ENCODE measurements at regions of chr3 and their contacts with region 1.

Region 1: GRCh38 chr3:171829841-171830517 is 13.2 kb upstream of the TMEM212 start:
- DNase-seq: peak; percentile 88
- H3K4me3 Mint-ChIP-seq: no peak overlapping the region
- H3K27ac Mint-ChIP-seq: no peak overlapping the region
- H3K4me1 Mint-ChIP-seq: peaks cover 28% of the 10 kb centered on the region
- H3K27me3 Mint-ChIP-seq: no peaks in the 10 kb centered on the region
- CTCF ChIP-seq: peak; percentile 85

Region 2: DNA sequence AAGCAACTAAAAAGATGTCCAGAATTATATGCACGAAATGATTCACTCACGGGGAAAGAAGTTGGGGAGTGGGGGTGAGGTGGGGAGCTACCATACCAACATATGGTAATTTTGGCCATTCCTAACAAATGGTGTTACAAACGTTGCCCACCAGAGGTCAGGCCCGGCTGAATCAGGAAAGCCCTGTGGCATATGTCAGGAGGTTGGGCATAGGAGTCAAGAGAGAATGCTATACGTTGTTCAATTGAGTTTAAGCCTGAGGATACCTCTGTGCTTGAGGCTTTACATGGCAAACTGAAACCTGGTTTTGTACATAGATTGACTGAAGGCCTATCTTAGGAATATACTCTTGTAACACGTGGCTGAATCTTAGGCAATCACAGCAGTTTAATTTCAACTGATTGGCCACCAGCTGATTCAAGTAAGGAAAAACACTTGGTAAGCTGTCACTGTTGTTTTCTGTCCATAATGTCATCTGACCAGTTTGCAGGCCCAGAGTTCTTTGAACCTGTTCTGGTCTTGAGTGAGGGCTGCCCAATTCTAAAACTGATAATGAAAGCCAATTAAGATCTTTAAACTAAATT is 780.0 kb before region 1 on chr3:
- CTCF ChIA-PET with region 1: interaction called, 5 read pairs
- POLR2A ChIA-PET with region 1: no interaction called
- intact Hi-C with region 1: loop called (anchors 5 kb)
- DNase-seq: peak; percentile 77
- H3K4me3 Mint-ChIP-seq: no peak overlapping the region
- H3K27ac Mint-ChIP-seq: peak overlapping the region; percentile 11
- H3K4me1 Mint-ChIP-seq: peaks cover 8% of the 10 kb centered on the region
- H3K27me3 Mint-ChIP-seq: no peaks in the 10 kb centered on the region
- CTCF ChIP-seq: peak; percentile 79

Region 3: DNA sequence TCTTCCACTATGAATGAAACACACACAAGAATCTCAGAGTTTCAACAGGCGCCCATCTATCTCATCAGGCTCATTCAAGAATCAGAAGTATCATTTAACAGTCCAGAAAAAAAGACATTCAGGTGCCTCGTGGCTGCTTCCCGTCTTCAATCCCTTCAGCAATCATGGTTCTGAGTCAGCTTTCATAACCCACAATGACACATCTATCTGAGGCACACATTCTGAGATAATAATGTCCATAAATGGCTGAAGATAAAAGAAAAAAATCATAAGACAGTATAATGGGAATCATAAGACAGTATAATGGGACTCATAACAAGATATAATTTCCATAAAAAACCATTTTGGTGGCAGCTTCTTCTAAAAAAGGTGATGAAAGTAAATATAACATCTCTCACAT is 422.2 kb before region 1 on chr3:
- CTCF ChIA-PET with region 1: no interaction called
- POLR2A ChIA-PET with region 1: no interaction called
- intact Hi-C with region 1: no loop called
- DNase-seq: peak; percentile 34
- H3K4me3 Mint-ChIP-seq: no peak overlapping the region
- H3K27ac Mint-ChIP-seq: peak overlapping the region; percentile 62
- H3K4me1 Mint-ChIP-seq: peaks cover 9% of the 10 kb centered on the region
- H3K27me3 Mint-ChIP-seq: no peaks in the 10 kb centered on the region
- CTCF ChIP-seq: no peak

Region 4: DNA sequence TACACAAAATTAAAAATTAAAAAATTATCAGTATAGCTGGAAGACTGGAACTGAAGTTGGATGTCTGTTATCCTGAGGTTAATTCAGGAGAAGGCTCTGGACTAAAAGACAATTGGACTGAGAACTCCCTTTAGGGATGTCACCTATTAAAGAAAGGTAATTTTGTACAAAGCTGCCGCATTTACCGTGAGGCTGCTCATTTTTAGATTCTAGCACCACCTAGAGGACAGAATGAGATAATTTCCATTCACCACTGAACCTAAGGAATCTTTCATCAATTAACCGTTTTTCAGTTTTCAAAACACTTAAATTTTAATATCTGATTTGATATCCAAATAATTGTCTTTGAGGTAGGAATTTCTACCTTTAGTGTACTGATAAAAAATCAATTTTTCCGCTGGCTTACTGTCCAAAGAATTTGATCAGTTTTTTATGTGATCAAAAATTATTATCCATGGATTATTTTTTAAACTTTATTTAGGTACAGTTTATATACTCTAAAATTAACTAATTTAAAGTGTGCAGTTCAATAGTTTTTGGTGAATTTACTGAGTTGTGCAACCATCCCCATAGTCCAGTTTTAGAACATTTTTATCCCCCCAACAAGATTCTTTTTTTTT is 263.1 kb before region 1 on chr3:
- CTCF ChIA-PET with region 1: interaction called, 17 read pairs
- POLR2A ChIA-PET with region 1: no interaction called
- intact Hi-C with region 1: loop called (anchors 1 kb)
- DNase-seq: peak; percentile 56
- H3K4me3 Mint-ChIP-seq: no peak overlapping the region
- H3K27ac Mint-ChIP-seq: no peak overlapping the region
- H3K4me1 Mint-ChIP-seq: no peaks in the 10 kb centered on the region
- H3K27me3 Mint-ChIP-seq: no peaks in the 10 kb centered on the region
- CTCF ChIP-seq: peak; percentile 69

Region 5: DNA sequence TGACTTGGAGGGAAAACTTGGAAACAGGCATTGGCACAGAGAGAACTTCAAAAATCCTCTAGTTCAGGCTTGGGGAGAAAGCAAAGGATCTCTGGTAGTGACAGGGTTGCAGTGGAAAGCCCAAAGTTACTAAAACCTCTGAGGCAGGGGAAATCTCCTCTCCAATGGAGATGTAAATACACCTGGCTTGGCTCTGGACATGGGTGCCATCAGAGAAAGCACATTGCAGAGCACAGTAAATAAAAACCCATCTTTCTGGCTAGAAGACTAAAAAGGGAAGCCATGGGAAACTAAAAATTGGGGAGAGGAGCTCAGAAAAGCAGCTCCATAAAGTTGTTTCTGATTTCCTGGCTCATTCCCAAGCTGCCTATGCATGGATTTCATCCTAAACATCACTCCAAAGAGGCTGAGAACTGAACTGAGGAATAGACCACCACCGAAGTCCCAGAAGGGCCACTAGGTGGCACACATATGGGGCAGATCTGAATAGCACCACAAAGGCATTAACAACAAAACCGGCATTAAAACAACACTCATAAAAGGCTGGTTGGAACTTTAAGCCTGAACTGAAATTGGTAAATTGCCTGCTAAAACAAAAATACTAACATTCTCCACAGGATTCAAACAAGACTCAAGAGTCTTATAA is 126.1 kb before region 1 on chr3:
- CTCF ChIA-PET with region 1: interaction called, 24 read pairs
- POLR2A ChIA-PET with region 1: interaction called, 3 read pairs
- intact Hi-C with region 1: loop called (anchors 1 kb)
- DNase-seq: peak; percentile 58
- H3K4me3 Mint-ChIP-seq: no peak overlapping the region
- H3K27ac Mint-ChIP-seq: no peak overlapping the region
- H3K4me1 Mint-ChIP-seq: no peaks in the 10 kb centered on the region
- H3K27me3 Mint-ChIP-seq: no peaks in the 10 kb centered on the region
- CTCF ChIP-seq: peak; percentile 44

Region 6: GRCh38 chr3:171736556-171736955 is 93.4 kb before region 1 on chr3:
- CTCF ChIA-PET with region 1: no interaction called
- POLR2A ChIA-PET with region 1: no interaction called
- intact Hi-C with region 1: no loop called
- DNase-seq: no peak
- H3K4me3 Mint-ChIP-seq: no peak overlapping the region
- H3K27ac Mint-ChIP-seq: no peak overlapping the region
- H3K4me1 Mint-ChIP-seq: no peaks in the 10 kb centered on the region
- H3K27me3 Mint-ChIP-seq: no peaks in the 10 kb centered on the region
- CTCF ChIP-seq: no peak

Region 7: GRCh38 chr3:171796625-171797264 is 33.2 kb before region 1 on chr3:
- CTCF ChIA-PET with region 1: interaction called, 17 read pairs
- POLR2A ChIA-PET with region 1: interaction called, 5 read pairs
- intact Hi-C with region 1: no loop called
- DNase-seq: no peak
- H3K4me3 Mint-ChIP-seq: no peak overlapping the region
- H3K27ac Mint-ChIP-seq: no peak overlapping the region
- H3K4me1 Mint-ChIP-seq: peaks cover 23% of the 10 kb centered on the region
- H3K27me3 Mint-ChIP-seq: no peaks in the 10 kb centered on the region
- CTCF ChIP-seq: no peak

Region 8: GRCh38 chr3:171878461-171879225 is 48.7 kb after region 1 on chr3:
- CTCF ChIA-PET with region 1: no interaction called
- POLR2A ChIA-PET with region 1: no interaction called
- intact Hi-C with region 1: no loop called
- DNase-seq: peak; percentile 25
- H3K4me3 Mint-ChIP-seq: no peak overlapping the region
- H3K27ac Mint-ChIP-seq: peak overlapping the region; percentile 29
- H3K4me1 Mint-ChIP-seq: peaks cover 47% of the 10 kb centered on the region
- H3K27me3 Mint-ChIP-seq: no peaks in the 10 kb centered on the region
- CTCF ChIP-seq: no peak

Region 9: DNA sequence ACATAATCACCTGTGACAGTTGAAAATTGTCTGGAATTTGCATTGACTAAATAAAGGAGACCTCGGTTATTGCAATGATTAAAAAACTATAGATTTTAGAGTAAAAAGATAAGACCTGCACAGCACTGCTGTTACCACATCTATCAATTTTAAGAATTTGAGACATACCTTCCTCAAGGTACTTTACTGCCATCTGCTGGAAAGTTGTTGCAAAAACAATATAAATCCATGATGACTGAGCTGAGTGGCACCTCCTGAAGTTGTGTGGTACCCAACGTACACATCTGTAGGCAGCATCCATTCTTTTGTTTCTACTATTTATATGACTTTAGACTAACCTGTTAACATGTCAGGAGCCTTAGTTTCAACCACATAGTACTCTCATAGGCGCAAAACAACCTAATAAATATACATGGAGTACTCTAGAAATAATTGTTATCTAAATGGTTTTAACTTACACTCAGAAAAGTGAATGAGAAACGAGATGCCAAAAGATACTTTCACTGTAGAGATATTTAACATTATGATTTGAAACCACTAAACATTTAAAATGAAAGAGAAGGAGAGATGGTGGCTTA is 511.6 kb after region 1 on chr3:
- CTCF ChIA-PET with region 1: interaction called, 7 read pairs
- POLR2A ChIA-PET with region 1: no interaction called
- intact Hi-C with region 1: loop called (anchors 1 kb)
- DNase-seq: peak; percentile 67
- H3K4me3 Mint-ChIP-seq: no peak overlapping the region
- H3K27ac Mint-ChIP-seq: no peak overlapping the region
- H3K4me1 Mint-ChIP-seq: no peaks in the 10 kb centered on the region
- H3K27me3 Mint-ChIP-seq: no peaks in the 10 kb centered on the region
- CTCF ChIP-seq: peak; percentile 66

Measured in MCF 10A (cell line).